ENCODE measurements at regions of chr18 and their contacts with region 1.

Region 1: DNA sequence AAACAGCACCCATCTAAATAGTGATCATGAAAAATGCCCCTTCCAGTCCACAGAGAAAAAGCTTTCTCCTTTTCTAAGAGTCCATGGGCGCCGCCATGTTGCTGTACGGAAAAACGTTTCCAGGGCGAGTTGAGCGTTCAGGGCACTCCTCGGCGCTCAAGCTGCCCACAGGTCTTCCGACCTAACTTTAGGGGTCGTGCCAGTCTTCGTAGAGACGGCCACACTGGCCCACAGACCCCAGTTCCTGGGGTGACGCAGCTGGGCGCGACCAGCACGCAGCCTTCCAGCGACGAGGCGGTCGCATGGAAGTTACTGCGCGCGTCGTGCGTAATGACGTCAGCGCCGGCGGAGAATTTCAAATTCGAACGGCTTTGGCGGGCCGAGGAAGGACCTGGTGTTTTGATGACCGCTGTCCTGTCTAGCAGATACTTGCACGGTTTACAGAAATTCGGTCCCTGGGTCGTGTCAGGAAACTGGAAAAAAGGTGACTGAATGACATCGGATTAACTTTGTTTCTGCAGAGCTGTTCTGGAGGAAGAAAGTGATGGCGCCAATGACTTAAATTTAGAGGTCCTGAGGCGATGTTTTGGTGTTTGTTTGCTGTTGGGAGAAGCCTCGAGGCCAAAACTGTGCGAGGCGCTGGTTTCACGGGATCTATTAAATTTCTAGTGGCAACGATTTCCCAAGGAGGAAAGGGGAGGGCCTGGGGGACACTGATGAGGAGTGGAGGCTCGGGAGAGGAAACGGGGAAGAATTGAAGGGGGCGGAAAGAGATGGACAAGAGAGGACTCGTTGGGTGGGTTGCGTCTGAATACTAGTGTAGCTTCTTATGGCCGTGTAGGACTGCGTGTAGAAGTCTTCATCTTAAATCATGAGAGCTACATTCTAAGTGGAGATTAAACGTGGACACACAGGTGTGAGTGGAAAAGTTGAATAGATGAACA is at the starts of genes METTL4 and NDC80:
- DNase-seq: peak; percentile 88
- ATAC-seq: peak; percentile 95 to 96
- total RNA-seq, gene METTL4: 5.5 to 6.8 TPM
- total RNA-seq, gene NDC80: 0.29 to 1.2 TPM

Region 2: DNA sequence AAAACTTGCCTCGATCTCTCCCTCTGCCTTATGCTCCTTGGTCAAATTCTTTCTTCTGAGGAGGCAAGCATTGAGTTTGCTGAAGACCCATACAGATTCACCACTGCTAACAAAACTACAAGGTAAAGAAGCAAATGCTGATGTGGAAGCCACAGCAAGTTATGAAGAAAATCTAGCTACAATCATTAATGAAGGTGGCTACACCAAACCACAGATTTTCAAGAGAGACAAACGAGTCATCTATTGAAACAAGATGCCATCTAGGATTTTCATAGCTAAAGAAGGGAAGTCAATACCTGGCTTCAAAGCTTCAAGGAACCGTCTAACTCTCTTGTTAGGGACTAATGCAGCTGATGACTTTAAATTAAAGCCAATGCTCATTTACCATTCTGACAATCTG is 203.4 kb before region 1 on chr18:
- intact Hi-C with region 1: no loop called
- DNase-seq: no peak
- ATAC-seq: no peak

Region 3: DNA sequence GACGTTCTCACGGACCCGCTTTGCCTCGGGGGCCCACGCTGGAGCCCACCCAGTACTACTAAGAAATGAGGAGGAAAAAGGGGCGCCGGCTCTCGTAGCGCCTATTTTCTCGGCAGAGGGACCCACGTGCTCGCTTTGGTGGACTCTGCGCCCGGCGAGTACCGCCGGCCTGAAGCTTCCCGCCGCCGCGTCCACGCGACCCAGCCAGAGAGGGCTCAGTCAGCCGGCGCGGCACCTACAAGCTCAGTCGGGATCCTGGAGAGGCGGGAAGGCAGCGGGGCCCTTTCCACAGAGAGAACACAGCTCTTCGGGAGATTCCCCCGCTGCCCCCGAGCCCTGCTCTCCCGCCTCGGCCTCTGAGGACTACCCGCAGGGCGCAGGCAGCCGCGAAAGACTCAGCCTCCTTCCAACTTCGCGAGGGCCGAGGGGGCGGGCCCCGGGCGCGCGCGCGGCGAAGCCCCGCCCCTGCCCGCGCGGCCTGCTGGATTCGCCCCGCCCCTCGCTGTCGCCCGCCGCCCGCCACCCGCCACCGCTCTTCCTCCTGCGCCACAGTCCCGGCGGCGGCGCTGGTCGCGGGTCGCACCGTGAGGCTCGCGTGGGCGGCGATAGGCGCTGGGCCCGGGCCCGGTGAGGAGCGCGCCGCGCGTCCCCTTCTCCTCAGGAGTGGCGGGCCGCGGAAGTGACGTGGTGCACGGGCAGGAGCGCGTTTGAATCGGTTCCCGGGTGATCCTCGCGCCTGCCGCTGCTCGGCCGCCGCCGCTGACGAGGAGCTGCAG is 83.9 kb after region 1 on chr18 and contains the start of gene SMCHD1:
- intact Hi-C with region 1: loop called in 1 of 2 experiments (anchors 2 kb)
- DNase-seq: peak; percentile 92
- ATAC-seq: peak; percentile 90 to 93
- total RNA-seq, gene SMCHD1: 24.5 to 28.7 TPM

Region 4: DNA sequence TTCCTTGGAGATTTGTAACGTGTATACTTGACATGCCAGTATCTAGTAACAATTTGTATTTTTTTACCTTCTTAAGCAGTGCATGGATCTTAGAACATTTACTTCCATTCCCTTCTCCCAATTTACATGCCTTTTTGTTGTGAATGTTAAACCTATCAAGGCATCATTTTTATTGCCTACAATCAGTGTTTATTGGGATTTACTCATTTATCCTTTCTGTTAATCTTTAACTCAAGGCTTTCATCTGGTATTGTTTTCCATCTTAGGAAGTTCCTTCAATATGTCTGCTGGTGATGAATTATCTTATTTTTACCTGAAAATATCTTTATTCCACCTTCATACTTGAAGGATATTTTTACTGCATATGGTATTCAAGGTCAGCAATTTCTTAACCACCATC is 186.8 kb after region 1 on chr18:
- intact Hi-C with region 1: no loop called
- DNase-seq: no peak
- ATAC-seq: no peak